Dorsolateral prefrontal cortex (tissue), 120 donors: ENCODE measurements at regions of chr7 and their contacts with region 1.

Region 1: GRCh38 chr7:1473864-1474512 is 14.7 kb upstream of the MICALL2 start:
- DNase-seq: peak; percentile 83 to 92 (median 90)
- H3K4me3 ChIP-seq: no peak overlapping the region
- H3K27ac ChIP-seq: peak overlapping the region in 22 of 59 donors; percentile 3 to 75 (median 46)
- H3K27me3 ChIP-seq: no peaks in the 10 kb centered on the region
- CTCF ChIP-seq: peak; percentile 51 to 97 (median 93)

Region 2: DNA sequence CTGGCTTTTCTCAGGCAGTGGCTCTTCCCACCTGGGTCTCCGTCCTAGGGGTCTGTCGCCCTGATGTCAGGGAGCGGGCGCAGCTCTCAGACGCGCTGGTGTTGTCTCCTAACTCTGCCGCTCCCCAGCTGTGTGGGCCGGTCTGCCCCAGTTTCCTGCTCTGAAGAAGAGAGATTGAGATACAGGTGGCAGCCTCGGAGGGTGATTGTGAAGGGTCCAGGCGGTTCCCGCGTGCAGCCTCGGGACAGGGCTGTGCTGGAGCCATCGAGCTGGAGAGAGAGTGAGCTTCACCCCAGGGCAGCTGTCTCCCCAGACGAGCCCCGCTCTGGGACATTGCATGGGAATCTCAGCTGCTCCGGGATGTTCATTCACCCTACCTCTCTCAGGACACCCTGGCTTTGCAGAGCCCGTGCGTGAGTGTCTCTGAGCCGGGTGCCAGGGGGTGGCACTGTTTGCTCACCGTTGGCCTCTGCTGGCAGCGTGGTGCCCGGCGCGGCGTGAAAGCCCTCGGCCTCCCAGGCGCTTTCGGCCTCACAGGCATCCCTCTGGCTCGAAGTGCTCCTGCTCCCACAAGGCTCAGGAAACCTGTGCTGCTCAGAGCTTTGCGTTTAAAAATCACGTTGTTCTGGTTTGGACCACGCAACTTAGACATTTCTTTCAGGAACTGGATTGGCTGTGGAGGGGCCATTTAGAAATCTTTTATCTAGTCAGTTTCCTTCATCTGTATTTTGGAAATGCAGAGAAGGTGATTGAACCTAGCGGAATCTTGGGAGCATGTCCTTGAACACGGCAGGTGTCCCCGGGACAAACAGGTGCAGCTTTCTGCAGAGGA is 280.2 kb before region 1 on chr7:
- intact Hi-C with region 1: loop called (anchors 2 to 10 kb)
- DNase-seq: peak; percentile 63 to 92 (median 68)
- H3K4me3 ChIP-seq: no peak overlapping the region
- H3K27ac ChIP-seq: no peak overlapping the region
- H3K27me3 ChIP-seq: peaks cover 0 to 56% (median 19%) of the 10 kb centered on the region in 45 donors
- CTCF ChIP-seq: peak in 55 of 56 donors; percentile 16 to 82 (median 60)

Region 3: DNA sequence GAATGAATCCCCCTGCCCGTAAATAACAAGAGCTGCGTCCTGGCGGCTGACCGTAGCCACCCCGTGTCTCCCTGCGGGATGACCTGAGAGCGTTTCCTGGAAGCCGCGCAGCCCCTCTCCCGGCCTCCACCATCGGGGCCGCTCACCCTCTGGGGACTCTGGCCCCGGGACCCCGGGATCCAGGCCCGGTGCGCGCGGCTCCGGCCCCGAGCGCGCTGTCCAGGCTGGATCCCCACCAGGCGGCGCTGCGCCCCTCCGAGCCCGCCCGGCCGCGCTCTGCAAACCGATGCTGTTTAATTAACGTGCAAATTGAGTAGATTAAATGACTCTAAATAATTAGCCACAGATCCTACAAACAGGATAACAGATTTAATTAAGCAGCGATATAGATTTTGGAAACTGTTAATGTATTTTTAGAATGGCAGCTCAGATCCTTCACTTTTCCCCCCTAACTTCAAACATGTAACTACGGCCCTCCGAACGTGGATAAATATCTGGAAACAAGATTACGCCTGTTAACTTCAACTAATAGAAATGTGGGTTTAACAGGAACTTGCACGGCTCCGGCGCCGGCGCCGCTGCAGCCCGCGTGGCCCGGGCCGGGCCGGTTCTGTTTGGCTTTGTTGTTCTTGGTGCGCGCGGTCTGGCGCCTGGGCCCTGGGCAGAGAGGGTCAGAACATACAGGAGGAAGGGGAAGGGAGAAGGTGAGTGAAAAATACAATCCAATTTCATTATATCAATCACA is 248.4 kb before region 1 on chr7:
- intact Hi-C with region 1: loop called (anchors 2 to 5 kb)
- DNase-seq: peak in 3 of 10 donors; percentile 31 to 70 (median 61)
- H3K4me3 ChIP-seq: no peak overlapping the region
- H3K27ac ChIP-seq: peak overlapping the region in 1 of 59 donors; percentile 80
- H3K27me3 ChIP-seq: peaks cover 22 to 100% (median 89%) of the 10 kb centered on the region in 45 donors
- CTCF ChIP-seq: peak in 55 of 56 donors; percentile 28 to 91 (median 77)

Region 4: DNA sequence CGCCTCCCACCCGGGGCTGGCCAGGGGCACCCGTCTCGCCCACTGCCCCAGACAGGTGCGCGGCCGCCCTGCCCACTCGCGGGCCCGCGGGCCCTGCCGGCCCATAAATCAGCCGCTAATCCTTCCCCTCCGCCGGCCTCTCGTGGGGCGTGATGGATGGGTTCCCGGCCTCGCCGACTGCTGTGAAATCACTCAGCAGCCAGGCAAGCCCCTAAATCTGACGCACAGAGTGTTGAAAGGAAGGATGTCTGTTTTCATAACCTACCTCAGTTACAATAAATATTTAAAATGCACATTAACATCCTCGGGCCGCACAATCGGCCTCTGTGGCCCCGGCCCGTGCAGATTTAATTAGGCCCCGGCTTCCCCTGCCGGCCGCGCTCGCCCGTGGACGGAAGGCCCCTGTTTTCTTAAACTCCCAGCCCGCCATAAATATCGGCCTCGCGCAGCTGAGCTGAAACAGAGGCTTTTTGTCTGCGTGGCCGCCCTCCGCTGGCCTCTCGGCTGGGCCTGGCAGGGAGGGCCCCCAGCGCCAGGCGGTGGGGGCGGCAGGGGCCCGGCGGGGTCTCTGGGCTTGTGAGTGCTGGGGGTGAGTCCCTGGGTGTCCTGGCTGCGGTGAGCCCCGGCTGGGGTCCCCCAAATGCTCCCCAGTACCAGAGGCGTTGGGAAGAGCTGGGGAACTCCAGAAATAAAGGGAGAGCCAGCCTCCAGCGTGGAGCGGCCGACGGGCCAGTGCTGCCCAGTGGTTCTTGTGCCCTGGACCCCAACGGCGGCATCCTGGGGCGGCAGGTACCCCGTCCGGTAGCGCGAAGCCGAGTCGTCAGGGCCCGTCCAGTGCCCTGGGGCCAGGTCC is 150.6 kb before region 1 on chr7:
- intact Hi-C with region 1: loop called in 1 of 2 experiments (anchors 10 kb)
- DNase-seq: peak in 4 of 10 donors; percentile 23 to 72 (median 46)
- H3K4me3 ChIP-seq: peak overlapping the region in 35 of 59 donors; percentile 1 to 53 (median 22)
- H3K27ac ChIP-seq: peak overlapping the region in 50 of 59 donors; percentile 37 to 86 (median 70)
- H3K27me3 ChIP-seq: peaks cover 0 to 29% (median 0%) of the 10 kb centered on the region in 45 donors
- CTCF ChIP-seq: peak in 6 of 56 donors; percentile 8 to 33 (median 15)

Region 5: DNA sequence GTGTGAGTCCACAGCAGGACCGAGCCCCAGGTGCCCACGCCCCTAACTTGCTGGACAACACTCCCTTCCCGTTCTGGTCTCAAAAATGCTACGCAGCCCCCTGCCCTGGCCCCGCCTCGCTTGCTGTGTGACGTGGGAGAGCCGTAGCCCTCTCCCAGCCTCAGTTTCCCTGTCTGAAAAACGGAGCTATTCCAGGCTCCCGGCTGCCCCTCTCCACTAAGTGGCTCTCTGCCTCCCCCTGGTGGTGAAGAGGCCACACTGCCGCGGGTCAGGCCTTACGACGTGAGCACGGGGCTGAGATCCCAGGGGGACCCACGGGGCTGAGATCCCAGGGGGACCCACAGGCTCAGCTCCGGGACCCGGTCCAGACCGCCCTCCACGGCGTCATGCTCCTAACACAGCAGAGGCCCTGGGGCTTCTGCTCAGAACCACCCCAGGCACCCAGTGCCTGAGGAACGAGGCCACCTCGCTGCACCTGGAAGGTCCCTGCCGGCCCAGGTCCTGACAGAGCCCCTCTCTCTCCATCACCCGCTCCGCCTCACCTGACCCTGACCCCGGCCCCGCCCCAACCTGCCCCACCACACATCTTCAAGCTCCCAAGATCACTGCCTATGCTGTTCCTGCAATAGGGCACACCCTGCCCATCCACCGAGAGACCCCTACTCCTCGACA is 41.4 kb before region 1 on chr7:
- intact Hi-C with region 1: loop called (anchors 5 kb)
- DNase-seq: peak in 8 of 10 donors; percentile 46 to 74 (median 66)
- H3K4me3 ChIP-seq: no peak overlapping the region
- H3K27ac ChIP-seq: no peak overlapping the region
- H3K27me3 ChIP-seq: peaks cover 0 to 23% (median 5%) of the 10 kb centered on the region in 45 donors
- CTCF ChIP-seq: peak; percentile 87 to 100 (median 96)

Region 6: DNA sequence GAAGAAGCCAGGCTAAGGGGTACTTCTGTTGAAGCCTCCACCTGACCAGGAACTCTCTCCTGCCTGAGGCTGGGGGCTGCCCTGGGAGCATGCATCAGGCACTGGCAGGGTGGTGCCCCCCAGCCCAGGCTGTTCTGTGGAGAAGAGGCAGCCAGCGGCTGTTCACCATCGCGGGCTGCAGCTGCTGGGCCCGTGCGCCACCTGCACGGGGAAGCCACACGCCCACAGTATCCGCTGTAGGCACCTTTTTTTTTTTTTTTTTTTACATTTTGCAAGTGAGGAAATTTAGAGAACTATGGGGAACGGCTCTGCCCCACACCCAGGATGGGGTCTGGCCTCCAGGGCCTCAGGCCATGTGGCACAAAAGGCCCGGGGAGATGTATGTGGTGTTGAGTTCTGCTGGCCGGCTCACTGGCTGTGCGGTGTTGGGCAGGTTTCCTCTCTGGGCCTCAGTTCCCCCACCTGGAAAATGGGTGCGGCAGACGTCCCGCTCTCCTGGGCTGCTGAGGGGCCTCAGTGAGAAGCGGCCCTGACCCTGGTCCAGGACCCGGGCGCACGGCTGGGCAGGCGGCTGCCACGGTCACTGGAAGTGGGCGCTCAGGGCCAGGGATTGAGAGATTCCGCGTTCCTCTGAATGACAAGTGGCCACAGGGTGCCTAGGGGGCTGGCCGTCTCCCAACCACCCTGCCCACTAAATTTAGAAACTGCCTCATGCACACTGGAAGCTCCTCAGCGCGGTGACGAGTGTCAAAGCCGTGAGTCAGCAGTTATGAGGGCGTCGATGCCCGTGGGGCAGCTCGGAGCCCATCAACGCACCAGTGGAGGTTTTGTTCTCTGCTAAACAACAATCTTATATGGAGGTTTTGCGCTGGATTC is 39.0 kb after region 1 on chr7:
- intact Hi-C with region 1: no loop called
- DNase-seq: peak in 8 of 10 donors; percentile 36 to 89 (median 75)
- H3K4me3 ChIP-seq: peak overlapping the region in 17 of 59 donors; percentile 3 to 37 (median 17)
- H3K27ac ChIP-seq: peak overlapping the region in 57 of 59 donors; percentile 15 to 97 (median 84)
- H3K27me3 ChIP-seq: peaks cover 0 to 3% (median 0%) of the 10 kb centered on the region in 45 donors
- CTCF ChIP-seq: no peak